GM13977 (cell line): ENCODE measurements at regions of chr17 and their contacts with region 1.

Region 1: GRCh38 chr17:41496820-41497408 is 7.2 kb upstream of the KRT36 start:
- DNase-seq: peak; percentile 71
- CTCF ChIP-seq: peak; percentile 52

Region 2: GRCh38 chr17:41071606-41072360 is 425.1 kb before region 1 on chr17:
- in situ Hi-C with region 1: no loop called
- DNase-seq: no peak
- CTCF ChIP-seq: no peak

Region 3: GRCh38 chr17:41456208-41456607 is 40.7 kb before region 1 on chr17:
- in situ Hi-C with region 1: no loop called
- DNase-seq: no peak
- CTCF ChIP-seq: no peak

Region 4: GRCh38 chr17:41579484-41580243 is 82.8 kb after region 1 on chr17:
- in situ Hi-C with region 1: loop called (anchors 25 kb)
- DNase-seq: peak; percentile 93
- CTCF ChIP-seq: peak; percentile 65